GM18951 (cell line): ENCODE measurements at regions of chr9 and their contacts with region 1.

Region 1: GRCh38 chr9:127187231-127187956 is 65.0 kb upstream of the ANGPTL2 start:
- POLR2A ChIP-seq: no peak

Region 2: DNA sequence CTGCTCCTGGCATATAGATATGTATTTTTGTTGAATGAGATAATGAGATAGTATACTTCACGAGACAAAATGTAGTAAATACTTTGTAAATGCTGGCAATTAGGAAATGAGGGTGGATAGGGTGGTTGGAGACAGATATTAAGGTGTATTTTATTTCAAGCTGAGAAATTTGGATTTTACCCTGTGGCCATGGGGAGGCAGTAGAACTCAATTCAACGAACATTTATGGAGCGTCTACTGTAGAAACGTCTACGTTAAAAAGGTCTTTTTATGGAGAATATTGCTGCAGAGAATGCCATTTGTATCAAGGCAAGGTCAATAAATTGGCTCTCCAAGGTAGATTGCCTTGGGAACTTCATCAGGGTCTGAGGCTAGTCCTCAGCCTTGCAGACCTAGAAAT is 294.3 kb before region 1 on chr9:
- in situ Hi-C with region 1: no loop called
- POLR2A ChIP-seq: no peak

Region 3: GRCh38 chr9:126965541-126966428 is 221.6 kb before region 1 on chr9:
- in situ Hi-C with region 1: loop called (anchors 10 kb)
- POLR2A ChIP-seq: no peak